Sigmoid colon (tissue), 7 donors: ENCODE measurements at regions of chr3 and their contacts with region 1.

Region 1: GRCh38 chr3:134650431-134651346 is at the start of gene KY:
- DNase-seq: no peak
- H3K4me3 ChIP-seq: peak within 1 kb of the TSS; percentile 28 to 62 (median 57)
- H3K27ac ChIP-seq: peak within 1 kb of the TSS; percentile 79 to 84 (median 80)
- H3K4me1 ChIP-seq: peaks cover 0 to 31% (median 25%) of the 10 kb centered on the region in 4 donors
- H3K27me3 ChIP-seq: no peaks in the 10 kb centered on the region
- CTCF ChIP-seq: no peak
- EP300 ChIP-seq: no peak
- POLR2A ChIP-seq: no peak
- total RNA-seq, gene KY: 1.3 to 3.9 (median 3.1) TPM

Region 2: GRCh38 chr3:134685929-134686802 is 35.5 kb after region 1 on chr3:
- intact Hi-C with region 1: no loop called
- DNase-seq: no peak
- H3K4me3 ChIP-seq: no peak overlapping the region
- H3K27ac ChIP-seq: no peak overlapping the region
- H3K4me1 ChIP-seq: peaks cover 0 to 18% (median 0%) of the 10 kb centered on the region in 4 donors
- H3K27me3 ChIP-seq: no peaks in the 10 kb centered on the region
- CTCF ChIP-seq: no peak
- EP300 ChIP-seq: no peak
- POLR2A ChIP-seq: no peak

Region 3: DNA sequence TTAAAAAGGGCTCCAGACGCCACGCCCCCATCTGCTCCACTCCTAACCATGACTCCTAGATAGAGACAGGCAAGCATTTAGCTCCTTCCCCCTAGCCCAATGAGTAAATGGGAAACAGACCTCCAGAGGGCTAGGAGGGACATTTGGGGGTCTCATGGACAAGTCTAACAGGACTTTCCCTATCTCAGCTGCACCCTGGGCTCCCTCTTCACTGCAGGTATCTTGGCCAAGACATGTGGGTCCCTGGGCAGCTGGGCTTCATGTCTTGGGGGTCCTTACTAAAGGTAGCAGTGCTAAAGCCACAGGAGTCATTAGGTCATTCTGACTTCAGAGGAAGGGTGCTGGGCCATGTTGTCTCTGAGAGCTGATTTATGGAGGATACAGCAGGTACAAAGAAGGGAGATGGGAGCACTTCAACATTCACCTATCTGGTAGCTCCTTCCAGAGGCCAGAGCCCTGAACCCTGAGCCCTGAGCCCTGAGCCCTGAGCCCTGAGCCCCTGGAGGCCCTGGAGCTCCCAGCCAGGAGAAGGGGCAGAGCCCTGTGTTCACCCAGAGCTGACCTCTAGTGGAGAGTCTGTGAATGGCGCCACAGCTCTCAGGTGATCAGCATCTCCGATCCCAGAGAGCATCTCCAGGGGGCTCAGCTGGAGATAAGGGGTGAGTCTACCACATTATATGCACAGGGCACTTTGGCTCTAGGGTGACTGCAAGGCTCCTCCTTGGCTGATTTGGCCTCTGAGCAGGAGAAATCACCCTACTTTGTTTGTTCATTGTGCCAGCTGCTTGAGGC is 104.3 kb after region 1 on chr3:
- intact Hi-C with region 1: loop called (anchors 2 kb)
- DNase-seq: no peak
- H3K4me3 ChIP-seq: no peak overlapping the region
- H3K27ac ChIP-seq: no peak overlapping the region
- H3K4me1 ChIP-seq: no peaks in the 10 kb centered on the region
- H3K27me3 ChIP-seq: no peaks in the 10 kb centered on the region
- CTCF ChIP-seq: peak; percentile 12 to 66 (median 56)
- EP300 ChIP-seq: no peak
- POLR2A ChIP-seq: no peak